ENCODE measurements at regions of chr3 and their contacts with region 1.

Region 1: GRCh38 chr3:72482589-72483321 is 365.5 kb downstream of the SHQ1 start:
- DNase-seq: no peak
- H3K4me3 ChIP-seq: peak overlapping the region in 1 of 2 donors; percentile 3
- H3K27ac ChIP-seq: no peak overlapping the region
- H3K4me1 ChIP-seq: peaks cover 3% of the 10 kb centered on the region
- H3K27me3 ChIP-seq: no peaks in the 10 kb centered on the region
- CTCF ChIP-seq: no peak
- POLR2A ChIP-seq: no peak

Region 2: GRCh38 chr3:72665701-72666443 is 183.1 kb after region 1 on chr3:
- intact Hi-C with region 1: loop called (anchors 10 kb)
- DNase-seq: peak; percentile 33
- H3K4me3 ChIP-seq: no peak overlapping the region
- H3K27ac ChIP-seq: no peak overlapping the region
- H3K4me1 ChIP-seq: no peaks in the 10 kb centered on the region
- H3K27me3 ChIP-seq: no peaks in the 10 kb centered on the region
- CTCF ChIP-seq: peak in 3 of 4 experiments; percentile 48 to 54 (median 50)
- POLR2A ChIP-seq: no peak